ENCODE measurements at regions of chr14 and their contacts with region 1.

Region 1: DNA sequence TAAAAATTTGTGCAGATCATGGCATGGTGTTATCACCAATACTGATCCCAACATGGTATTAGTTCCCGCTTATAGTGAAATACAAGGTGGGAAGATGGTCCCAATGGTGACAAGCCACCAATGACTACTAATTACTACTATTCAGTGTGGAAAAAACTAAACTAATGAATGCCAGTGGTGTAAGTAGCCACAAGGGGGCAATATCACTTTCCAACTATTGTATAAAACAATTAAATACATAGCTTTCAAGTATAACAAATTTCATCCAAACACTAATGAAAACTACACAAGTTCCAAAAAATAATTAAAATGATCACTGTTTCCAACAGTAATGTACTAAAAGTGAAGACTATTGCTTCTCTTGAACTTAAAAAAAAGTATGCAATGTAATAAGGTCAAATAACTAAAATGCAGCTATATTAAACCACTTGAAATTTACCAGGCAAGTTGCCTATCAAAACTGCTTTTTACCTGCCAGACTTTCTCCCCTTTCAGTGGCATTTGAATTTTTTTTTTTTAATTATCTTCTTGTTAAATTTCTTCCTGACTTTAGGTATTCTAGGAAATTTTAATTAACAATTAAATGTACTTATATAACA is 58.0 kb downstream of the PAPLN start:
- DNase-seq: no peak
- H3K4me3 ChIP-seq: no peak overlapping the region
- CTCF ChIP-seq: peak; percentile 43

Region 2: DNA sequence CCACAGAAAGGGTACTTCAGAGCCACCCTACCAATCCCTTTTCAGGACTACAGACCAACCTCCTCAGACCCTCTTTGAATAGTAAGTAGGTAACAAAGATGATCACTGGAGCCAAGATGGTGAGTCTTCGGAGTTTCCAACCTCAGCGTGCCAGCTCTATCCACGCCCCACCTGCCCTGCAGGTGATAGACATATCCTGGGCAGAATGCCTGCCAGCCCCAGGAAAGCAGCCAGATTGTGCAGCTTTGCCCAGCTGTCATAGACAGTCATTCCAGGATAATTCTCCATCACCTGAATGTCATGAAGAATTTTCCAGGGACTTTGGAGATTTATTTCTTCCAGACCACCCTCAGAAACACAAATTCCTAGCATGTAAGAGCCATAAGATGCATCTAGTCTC is 928.7 kb before region 1 on chr14:
- CTCF ChIA-PET with region 1: no interaction called
- POLR2A ChIA-PET with region 1: no interaction called
- DNase-seq: no peak
- H3K4me3 ChIP-seq: no peak overlapping the region
- CTCF ChIP-seq: no peak

Region 3: DNA sequence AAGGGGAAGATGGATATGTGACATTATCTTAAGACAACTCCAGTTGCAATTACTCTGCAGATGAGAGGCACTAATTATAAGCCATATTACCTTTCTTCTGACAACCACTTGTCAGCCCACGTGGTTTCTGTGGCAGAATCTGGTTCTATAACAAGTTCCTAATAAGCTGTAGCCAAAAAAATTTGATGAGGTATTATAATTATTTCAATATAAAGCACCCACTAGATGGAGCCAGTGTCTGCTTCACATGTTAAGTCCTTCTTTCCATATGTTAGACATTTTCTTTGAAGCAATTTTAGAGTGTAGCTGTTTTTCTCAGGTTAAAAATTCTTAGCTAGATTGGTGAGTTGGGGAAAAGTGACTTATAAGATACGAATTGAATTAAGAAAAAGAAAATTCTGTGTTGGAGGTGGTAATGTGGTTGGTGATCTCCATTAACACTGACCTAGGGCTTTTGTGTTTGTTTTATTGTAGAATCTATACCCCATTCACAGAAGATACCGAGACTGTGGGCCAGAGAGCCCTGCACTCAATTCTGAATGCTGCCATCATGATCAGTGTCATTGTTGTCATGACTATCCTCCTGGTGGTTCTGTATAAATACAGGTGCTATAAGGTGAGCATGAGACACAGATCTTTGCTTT is 122.1 kb before region 1 on chr14:
- CTCF ChIA-PET with region 1: interaction called, 11 read pairs
- POLR2A ChIA-PET with region 1: no interaction called
- DNase-seq: peak; percentile 23
- H3K4me3 ChIP-seq: no peak overlapping the region
- CTCF ChIP-seq: peak; percentile 37

Region 4: GRCh38 chr14:73283608-73284379 is 11.5 kb before region 1 on chr14:
- CTCF ChIA-PET with region 1: interaction called, 46 read pairs
- POLR2A ChIA-PET with region 1: no interaction called
- DNase-seq: no peak
- H3K4me3 ChIP-seq: no peak overlapping the region
- CTCF ChIP-seq: peak; percentile 42

Region 5: DNA sequence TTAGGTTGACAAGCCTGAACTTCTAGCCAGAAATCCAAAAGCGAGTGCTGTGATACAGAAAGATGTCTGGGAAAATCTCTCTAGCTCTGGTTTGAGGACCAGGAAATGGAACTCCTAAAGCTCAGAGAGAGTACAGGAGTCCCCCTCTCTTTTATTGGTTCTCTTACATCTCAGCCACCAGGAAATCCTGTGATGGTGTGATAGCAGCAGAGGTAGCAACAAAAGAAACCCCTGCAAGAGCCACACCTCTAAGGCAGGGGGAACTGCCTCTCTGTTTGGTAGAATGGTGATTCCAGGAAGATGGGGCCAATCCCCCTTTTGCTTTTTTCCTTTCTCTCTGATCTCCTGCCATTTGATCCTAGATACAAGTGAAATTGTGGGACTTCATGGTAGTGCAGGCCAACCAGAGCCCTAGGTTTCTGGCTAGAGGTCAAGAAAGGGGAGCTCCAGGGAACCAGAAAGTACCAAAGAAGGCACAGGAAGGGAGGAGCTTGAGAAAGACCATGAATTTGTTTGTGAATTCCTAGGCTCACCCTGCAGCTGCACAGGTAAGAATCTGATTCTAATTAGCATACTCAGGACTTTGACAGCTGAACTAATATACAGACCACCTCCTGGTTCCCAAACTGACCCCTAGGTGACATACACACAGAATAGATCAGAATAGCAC is 30.5 kb after region 1 on chr14:
- CTCF ChIA-PET with region 1: interaction called, 10 read pairs
- POLR2A ChIA-PET with region 1: interaction called, 3 read pairs
- DNase-seq: no peak
- H3K4me3 ChIP-seq: no peak overlapping the region
- CTCF ChIP-seq: no peak

Region 6: DNA sequence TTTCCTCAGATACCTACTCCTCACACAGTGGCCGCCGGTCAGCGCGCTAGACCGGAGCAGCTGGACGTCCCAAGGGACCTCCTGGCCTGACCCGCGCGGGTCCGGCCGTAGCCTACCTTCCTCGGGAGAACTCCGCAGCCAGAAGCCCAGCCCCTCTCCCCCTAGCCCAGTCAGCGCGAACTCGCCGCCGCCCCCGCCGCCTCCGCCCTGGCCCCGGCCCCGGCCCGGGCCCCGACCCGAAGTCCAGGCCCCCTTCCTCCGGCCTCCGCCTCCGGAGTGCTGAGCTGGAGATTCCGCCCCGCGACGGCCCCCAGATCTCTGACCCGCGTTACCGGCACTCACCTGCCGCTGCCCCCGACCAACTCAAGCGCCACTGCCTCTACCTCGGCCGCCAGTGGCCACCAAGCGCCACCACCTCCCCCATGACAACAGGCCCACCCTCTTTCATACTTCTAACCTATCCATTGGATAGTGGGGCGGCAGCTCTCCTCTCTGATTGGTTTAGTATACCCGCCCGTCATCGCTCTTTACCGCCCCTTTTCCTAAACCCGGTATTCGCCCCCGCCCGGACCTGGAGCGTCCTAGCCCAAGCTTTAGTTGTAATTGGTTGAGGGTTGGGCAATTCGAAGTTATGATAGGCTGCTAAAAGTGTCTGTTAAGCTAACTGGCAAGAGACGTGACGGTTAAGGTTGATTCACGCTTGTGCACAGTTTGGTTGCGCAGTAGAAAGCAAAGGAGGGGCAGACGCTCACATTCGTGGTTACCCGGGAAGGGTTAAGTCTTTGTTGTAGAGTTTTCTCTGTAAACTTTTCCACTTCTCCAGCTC is 163.1 kb after region 1 on chr14 and contains the start of gene NUMB:
- CTCF ChIA-PET with region 1: interaction called, 33 read pairs
- POLR2A ChIA-PET with region 1: no interaction called
- DNase-seq: peak; percentile 100
- H3K4me3 ChIP-seq: peak within 1 kb of the TSS; percentile 79
- CTCF ChIP-seq: no peak

Region 7: DNA sequence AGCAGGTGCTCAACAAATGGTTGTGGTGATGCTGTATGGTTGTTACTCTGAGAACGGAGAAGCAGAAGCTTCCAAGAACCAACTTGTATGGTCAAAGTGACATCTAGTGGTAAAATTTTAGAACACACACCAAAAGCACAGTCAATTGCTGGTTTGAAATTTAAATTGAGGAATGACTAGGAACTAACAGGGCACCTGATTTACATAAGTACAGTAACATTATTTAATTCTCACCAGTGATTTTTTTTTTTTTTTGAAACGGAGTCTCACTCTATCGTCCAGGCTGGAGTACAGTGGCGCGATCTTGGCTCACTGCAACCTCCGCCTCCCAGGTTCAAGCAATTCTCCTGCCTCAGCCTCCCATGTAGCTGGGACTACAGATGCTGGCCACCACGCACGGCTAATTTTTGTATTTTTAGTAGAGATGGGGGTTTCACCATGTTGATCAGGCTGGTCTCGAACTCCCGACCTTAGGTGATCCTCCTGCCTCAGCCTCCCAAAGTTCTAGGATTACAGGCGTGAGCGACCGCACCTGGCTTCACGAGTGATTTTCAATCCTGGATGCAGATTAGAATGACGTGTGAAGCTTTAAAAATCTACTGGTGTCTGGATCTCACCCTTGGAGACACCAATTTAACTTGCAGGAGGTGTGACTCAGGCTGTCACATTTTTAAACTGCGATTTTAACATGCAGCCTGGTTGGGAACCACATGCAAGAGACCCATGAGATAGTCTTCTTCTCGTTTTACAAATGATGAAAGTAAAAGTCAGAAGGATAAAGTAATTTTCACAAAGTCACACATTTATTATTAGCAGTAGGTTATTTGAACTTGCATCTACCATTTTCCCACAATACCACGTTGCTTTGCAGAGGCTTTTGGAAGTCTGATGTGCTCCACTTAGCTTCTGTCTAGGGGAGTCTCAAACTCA is 177.2 kb after region 1 on chr14:
- CTCF ChIA-PET with region 1: interaction called, 270 read pairs
- POLR2A ChIA-PET with region 1: interaction called, 3 read pairs
- DNase-seq: no peak
- H3K4me3 ChIP-seq: no peak overlapping the region
- CTCF ChIP-seq: peak; percentile 50

Region 8: DNA sequence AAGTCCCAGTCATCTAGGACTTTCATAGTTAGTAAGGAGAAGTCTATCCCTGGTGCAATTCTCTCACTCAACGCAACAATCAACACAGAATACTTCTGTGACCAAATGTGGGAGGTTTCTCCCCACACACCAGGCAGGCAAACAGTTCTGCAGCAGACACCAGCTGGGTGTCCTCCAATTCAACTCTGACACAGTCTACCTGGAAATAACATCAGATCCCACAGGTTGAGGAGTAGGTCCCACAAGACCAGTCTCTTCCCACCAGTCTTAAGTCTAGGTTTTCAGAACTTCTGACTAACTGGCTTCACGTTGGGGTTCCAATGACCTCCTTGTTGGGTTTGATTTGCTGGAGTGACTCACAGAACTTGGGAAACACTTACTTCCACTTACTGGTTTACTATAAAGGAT is 331.9 kb after region 1 on chr14:
- CTCF ChIA-PET with region 1: no interaction called
- POLR2A ChIA-PET with region 1: no interaction called
- DNase-seq: no peak
- H3K4me3 ChIP-seq: no peak overlapping the region
- CTCF ChIP-seq: no peak

Measured in AG04449 (cell line).